ENCODE measurements at regions of chr14 and their contacts with region 1.

Region 1: GRCh38 chr14:96268431-96269358 is 12.7 kb downstream of the BDKRB1 start:
- DNase-seq: no peak
- H3K4me3 ChIP-seq: no peak overlapping the region
- H3K4me1 ChIP-seq: no peaks in the 10 kb centered on the region
- H3K27me3 ChIP-seq: no peaks in the 10 kb centered on the region

Region 2: DNA sequence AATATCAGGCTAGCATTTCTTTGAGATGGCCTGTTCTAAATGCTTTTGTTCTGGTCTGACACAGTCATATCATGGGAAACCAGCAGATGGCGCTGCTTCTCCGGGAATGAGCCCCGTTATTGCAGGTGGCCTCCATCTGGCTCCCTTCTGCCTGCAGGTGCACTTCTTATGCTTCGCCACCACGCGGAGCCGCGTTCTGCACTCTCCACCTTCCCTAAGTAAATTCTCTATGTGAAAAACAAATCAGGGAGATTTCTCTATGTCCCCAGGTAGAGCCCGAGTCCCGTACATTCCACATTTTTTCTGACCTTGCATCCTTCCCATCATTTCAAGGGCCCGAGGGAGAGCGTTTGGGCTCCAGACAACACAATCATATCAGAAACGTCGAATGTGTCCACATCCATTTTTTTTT is 707.7 kb before region 1 on chr14:
- in situ Hi-C with region 1: loop called (anchors 25 kb)
- DNase-seq: peak; percentile 90 to 95
- H3K4me3 ChIP-seq: no peak overlapping the region
- H3K4me1 ChIP-seq: peaks cover 7% of the 10 kb centered on the region
- H3K27me3 ChIP-seq: no peaks in the 10 kb centered on the region

Region 3: DNA sequence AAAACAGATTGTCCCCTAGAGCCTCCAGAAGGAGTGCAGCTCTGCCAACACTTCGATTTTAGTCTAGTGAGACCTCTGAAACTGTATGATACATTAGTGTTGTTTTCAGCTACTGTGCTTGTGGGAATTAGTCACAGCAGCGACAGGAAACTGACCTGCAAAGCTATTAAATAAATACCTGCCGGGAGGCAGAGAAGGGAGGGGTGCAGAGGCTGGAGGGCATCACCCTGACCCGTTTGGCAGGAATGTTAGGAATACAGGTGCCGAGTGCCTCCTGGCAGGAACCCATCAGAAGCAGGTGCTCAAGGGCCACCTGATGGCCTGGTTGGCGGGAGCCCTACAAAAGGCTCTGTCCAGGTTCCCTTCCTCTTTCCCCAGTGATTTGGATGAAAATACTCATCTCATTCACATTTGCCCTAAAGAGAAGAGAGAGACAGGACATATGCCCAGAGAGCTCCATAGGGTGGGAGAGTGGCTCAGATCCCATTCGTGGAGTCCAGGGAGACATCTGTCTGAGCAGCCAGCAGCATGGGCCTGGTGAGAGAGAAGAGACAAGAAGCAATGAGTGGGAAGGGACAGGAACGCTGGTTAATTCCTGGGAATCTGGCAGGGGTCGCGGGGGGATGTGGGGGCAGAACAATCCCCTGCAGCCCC is 184.9 kb before region 1 on chr14:
- in situ Hi-C with region 1: no loop called
- DNase-seq: no peak
- H3K4me3 ChIP-seq: no peak overlapping the region
- H3K4me1 ChIP-seq: no peaks in the 10 kb centered on the region
- H3K27me3 ChIP-seq: no peaks in the 10 kb centered on the region